ENCODE measurements at regions of chr6 and their contacts with region 1.

Region 1: DNA sequence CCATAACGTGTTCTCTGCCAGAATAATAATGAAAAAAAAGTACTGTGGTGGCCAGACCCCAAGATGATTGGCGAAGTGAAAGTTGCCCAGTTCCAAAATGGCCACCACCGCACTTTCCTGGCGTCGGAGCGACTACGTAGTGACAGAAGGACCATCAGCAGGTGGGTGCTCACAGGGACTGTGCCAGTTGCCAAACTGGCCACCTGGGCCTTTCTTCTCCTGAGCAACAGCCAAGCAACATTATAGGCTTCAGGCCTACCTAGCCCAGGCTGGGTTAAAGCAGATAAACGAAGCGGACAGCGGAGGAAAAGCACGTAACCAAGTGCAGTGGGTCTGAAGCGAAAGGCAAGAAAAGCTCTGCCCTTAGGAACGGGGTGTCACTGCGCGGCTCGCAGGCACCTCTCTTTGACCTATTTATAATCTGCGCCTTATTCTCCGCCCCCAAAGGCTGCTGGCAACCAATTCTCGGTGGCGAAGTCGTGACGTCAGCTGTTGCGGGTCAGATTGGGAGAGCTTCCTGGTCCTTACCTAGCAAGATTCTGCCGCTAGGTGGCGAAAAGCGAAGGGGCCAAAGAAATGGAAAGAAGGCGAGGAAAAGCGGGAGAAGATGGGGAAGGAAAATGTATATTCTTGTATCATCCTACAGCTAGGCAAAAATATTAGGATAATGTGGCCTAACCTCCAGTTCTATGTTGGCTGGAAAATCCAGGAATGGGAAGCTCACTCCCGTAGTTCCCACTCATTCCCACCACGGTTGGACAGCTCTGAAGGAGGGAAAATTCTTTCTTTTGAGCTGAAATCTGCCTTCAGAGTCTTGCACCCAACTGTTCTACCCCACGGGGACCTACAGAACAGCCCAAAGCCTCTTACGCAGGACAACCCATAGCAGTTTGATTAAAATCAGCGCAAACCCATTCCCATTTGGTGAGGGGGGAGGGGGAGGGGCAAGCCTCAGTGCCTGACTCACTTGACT is 6.9 kb upstream of the MOG start:
- DNase-seq: peak; percentile 89
- ATAC-seq: peak; percentile 97
- H3K4me3 ChIP-seq: peak overlapping the region; percentile 74
- H3K27ac ChIP-seq: peak overlapping the region; percentile 75
- H3K4me1 ChIP-seq: no peaks in the 10 kb centered on the region
- H3K27me3 ChIP-seq: no peaks in the 10 kb centered on the region
- CTCF ChIP-seq: peak; percentile 90 to 98 (median 96)
- EP300 ChIP-seq: peak in 1 of 2 experiments; percentile 17; a peak in 1 of 4 replicates
- POLR2A ChIP-seq: peak; percentile 91
- RAD21 ChIP-seq: 0 out of 2 replicates have a peak, but pooled peaks have one; percentile 19

Region 2: DNA sequence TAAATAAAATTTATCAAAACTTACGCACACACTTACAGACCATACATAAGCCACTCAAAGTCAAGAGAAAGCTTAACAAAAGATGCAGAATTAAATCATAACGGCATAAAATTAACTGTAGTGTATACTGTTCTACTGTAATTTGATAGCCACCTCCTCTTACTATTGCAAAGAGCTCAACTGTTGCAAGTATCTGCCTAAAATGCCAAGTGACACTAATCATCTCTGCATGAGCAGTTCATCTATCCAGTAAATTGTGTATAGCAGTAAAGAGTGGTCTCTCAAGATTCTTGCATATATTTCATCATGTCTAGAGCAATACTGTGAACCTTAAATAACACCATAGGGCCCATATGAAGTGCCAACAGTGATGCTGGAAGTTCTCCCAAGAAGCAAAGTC is 52.8 kb before region 1 on chr6:
- CTCF ChIA-PET with region 1: interaction called, 10 read pairs
- POLR2A ChIA-PET with region 1: no interaction called
- RAD21 ChIA-PET with region 1: no interaction called
- SMC1A ChIA-PET with region 1: interaction called, 3 read pairs
- in situ Hi-C with region 1: no loop called
- intact Hi-C with region 1: no loop called
- DNase-seq: no peak
- ATAC-seq: no peak
- H3K4me3 ChIP-seq: no peak overlapping the region
- H3K27ac ChIP-seq: no peak overlapping the region
- H3K4me1 ChIP-seq: no peaks in the 10 kb centered on the region
- H3K27me3 ChIP-seq: no peaks in the 10 kb centered on the region
- CTCF ChIP-seq: no peak
- EP300 ChIP-seq: no peak
- POLR2A ChIP-seq: no peak
- RAD21 ChIP-seq: no peak

Region 3: DNA sequence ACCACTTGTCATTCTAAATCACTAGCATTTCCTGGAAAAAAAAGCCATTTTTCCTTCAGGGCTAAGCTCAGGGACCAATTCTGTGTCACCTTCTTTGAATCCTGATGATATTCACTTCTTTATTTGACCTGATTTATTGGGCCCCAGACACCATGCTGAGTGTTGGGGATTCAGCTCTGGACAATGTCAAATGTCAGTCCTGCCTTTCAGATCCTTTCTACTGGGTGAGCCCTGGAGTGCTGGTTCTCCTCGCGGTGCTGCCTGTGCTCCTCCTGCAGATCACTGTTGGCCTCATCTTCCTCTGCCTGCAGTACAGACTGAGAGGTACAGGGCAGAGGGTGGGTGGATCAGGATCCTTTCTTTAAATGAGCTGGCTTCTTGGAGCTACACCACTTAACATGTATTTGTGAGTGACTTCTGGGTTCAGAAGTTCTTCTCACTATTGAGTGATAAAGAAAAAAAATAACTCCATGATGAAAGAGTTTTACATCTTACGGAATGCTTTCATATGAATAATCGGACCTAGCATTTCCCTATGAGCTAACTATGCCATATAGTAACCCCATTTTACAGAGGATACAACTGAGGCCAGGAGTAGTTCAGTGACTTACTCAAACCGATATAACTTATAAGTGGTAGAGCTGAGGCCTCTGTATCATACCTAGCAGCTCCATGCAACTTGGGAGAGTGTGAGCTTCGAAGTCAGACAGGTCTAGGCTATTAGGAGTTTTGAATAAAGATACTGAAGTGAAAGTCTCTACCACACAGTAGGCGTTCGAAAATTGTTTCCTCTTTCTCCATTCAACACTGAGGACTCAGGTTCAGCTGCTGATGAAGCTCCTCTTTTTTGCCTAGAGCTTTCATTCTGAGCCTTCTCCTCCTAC is 16.2 kb after region 1 on chr6:
- CTCF ChIA-PET with region 1: interaction called, 113 read pairs
- POLR2A ChIA-PET with region 1: no interaction called
- RAD21 ChIA-PET with region 1: interaction called, 7 read pairs
- SMC1A ChIA-PET with region 1: interaction called, 9 read pairs
- in situ Hi-C with region 1: no loop called
- intact Hi-C with region 1: no loop called
- DNase-seq: no peak
- ATAC-seq: no peak
- H3K4me3 ChIP-seq: no peak overlapping the region
- H3K27ac ChIP-seq: no peak overlapping the region
- H3K4me1 ChIP-seq: 0 out of 2 replicates have a peak, but pooled peaks cover 2% of the 10 kb centered on the region
- H3K27me3 ChIP-seq: peaks cover 0 to 1% of the 10 kb centered on the region in 2 experiments; a peak in 1 of 4 replicates
- CTCF ChIP-seq: no peak
- EP300 ChIP-seq: no peak
- POLR2A ChIP-seq: no peak
- RAD21 ChIP-seq: no peak

Region 4: DNA sequence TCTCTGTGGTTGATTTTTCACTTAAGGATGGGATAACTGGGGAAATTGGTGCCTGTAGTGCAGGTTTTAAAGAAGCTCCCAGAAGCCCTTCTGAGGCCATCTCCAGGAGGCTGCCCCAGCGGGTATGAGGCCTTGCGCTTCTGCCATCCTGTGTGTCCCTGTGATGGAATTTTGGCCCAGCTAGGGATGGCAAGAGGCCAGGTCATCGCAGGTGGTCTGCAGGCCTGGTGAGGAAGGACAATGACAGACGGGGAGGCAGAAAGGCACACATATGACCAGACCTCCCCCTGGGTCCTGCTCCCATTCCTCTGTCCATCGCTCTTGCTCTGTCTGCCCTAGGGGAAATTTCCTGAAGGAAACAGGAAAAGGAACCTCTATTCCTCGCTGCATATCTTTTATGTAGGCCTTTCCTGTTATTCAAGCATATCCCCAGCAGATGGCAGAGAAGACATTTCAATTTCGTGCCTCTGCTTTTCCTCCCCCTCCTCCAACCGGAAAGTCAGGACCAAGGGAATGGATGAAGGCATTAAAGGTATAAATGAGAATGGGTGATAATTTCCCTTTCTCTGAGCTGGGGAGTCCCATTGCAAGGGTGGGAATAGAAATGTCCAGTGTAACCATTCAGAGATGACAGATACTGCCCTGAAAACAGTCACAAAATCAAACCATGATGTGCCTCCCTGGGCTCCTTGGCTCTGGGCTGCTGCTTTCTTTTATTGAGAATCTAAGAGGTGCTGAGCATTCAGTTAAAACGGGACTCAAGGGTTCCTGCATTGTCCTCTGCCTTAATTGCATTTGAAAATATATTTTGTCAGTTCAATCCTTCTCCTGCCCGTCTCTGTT is 55.6 kb after region 1 on chr6:
- CTCF ChIA-PET with region 1: interaction called, 32 read pairs
- POLR2A ChIA-PET with region 1: no interaction called
- RAD21 ChIA-PET with region 1: interaction called, 7 read pairs
- SMC1A ChIA-PET with region 1: no interaction called
- in situ Hi-C with region 1: no loop called
- intact Hi-C with region 1: no loop called
- DNase-seq: no peak
- ATAC-seq: no peak
- H3K4me3 ChIP-seq: no peak overlapping the region
- H3K27ac ChIP-seq: no peak overlapping the region
- H3K4me1 ChIP-seq: peaks cover 11% of the 10 kb centered on the region; the same call in 1 of the 2 replicates
- H3K27me3 ChIP-seq: no peaks in the 10 kb centered on the region
- CTCF ChIP-seq: peak; percentile 34 to 54 (median 46); a peak in 5 of 6 replicates
- EP300 ChIP-seq: no peak
- POLR2A ChIP-seq: no peak
- RAD21 ChIP-seq: peak; percentile 60

Region 5: GRCh38 chr6:29752451-29753308 is 102.7 kb after region 1 on chr6:
- CTCF ChIA-PET with region 1: interaction called, 53 read pairs
- POLR2A ChIA-PET with region 1: interaction called, 7 read pairs
- RAD21 ChIA-PET with region 1: interaction called, 7 read pairs
- SMC1A ChIA-PET with region 1: interaction called, 9 read pairs
- in situ Hi-C with region 1: no loop called
- intact Hi-C with region 1: loop called (anchors 10 kb)
- DNase-seq: peak; percentile 54
- ATAC-seq: peak; percentile 85
- H3K4me3 ChIP-seq: peak overlapping the region; percentile 66
- H3K27ac ChIP-seq: peak overlapping the region; percentile 84
- H3K4me1 ChIP-seq: peaks cover 10% of the 10 kb centered on the region
- H3K27me3 ChIP-seq: no peaks in the 10 kb centered on the region
- CTCF ChIP-seq: peak; percentile 99 to 100 (median 100); a peak in 5 of 6 replicates
- EP300 ChIP-seq: no peak
- POLR2A ChIP-seq: peak; percentile 58; the same call in 1 of the 2 replicates
- RAD21 ChIP-seq: peak; percentile 83

Measured in GM12878 (cell line).